ENCODE measurements at regions of chr6 and their contacts with region 1.

Region 1: DNA sequence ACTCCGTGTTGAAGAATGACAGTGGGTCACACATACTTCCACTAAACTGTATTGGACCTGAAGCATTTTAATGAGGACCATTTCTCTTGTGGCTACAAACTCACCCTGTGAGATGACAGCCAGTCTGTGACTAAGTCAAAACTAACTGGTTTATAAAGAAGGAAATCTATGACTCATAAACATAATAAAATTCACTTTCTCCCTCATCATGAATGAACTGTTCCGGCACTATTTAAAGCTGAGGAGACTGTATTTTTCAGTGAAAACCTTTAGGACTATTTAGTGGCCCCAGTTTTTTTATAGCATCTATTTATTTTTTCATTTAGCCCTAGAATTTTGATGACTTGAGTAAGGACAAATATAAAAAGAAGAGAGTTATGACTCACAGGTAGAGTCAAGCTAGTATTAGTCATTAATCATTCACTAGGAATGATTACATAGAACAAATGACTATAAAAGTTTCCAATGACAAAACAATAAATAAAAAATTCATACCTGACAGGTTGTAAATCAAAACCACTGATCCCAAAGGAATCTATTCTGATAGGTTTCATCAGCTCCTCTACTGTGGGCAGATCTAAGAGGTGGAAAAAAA is 34.2 kb downstream of the CEP162 start:
- DNase-seq: no peak

Region 2: GRCh38 chr6:83884523-83884922 is 308.7 kb before region 1 on chr6:
- in situ Hi-C with region 1: loop called (anchors 25 kb)
- DNase-seq: peak; percentile 84

Region 3: DNA sequence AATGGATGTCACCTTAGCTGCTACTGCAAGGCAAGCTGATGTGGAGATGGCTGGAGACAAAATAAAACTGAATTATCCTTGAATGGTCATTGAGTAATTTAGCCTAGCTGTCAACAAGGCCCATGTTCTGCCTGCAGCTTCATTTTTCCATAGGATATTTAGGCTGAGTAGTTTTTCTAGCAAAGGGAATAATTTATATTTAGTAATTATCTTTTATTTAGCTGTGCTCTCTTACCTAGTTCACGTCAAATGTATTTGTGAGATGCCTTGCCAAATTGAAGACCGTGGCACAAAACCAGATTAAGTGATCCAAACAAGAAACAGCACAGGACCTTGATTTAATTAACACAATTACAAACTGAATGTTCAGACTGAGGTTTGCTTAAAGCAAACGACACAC is 111.7 kb after region 1 on chr6:
- in situ Hi-C with region 1: no loop called
- DNase-seq: no peak